CD4-positive, alpha-beta T cell (primary cell): ENCODE measurements at regions of chr17 and their contacts with region 1.

Region 1: GRCh38 chr17:44086364-44087311 is 16.1 kb downstream of the G6PC3 start:
- DNase-seq: peak in 10 of 14 experiments; percentile 10 to 78 (median 38)
- ATAC-seq: peak; percentile 76
- H3K4me3 ChIP-seq: no peak overlapping the region
- H3K4me3 Mint-ChIP-seq: no peak overlapping the region
- H3K27ac ChIP-seq: no peak overlapping the region
- H3K27ac Mint-ChIP-seq: no peak overlapping the region
- H3K4me1 ChIP-seq: peaks cover 6% of the 10 kb centered on the region
- H3K4me1 Mint-ChIP-seq: no peaks in the 10 kb centered on the region
- H3K27me3 ChIP-seq: no peaks in the 10 kb centered on the region
- H3K27me3 Mint-ChIP-seq: no peaks in the 10 kb centered on the region
- CTCF ChIP-seq: no peak

Region 2: GRCh38 chr17:43224146-43224695 is 862.4 kb before region 1 on chr17:
- CTCF ChIA-PET with region 1: no interaction called
- POLR2A ChIA-PET with region 1: no interaction called
- intact Hi-C with region 1: loop called in 1 of 2 experiments (anchors 10 kb)
- DNase-seq: no peak
- ATAC-seq: no peak
- H3K4me3 ChIP-seq: no peak overlapping the region
- H3K4me3 Mint-ChIP-seq: no peak overlapping the region
- H3K27ac ChIP-seq: no peak overlapping the region
- H3K27ac Mint-ChIP-seq: no peak overlapping the region
- H3K4me1 ChIP-seq: no peaks in the 10 kb centered on the region
- H3K4me1 Mint-ChIP-seq: no peaks in the 10 kb centered on the region
- H3K27me3 ChIP-seq: no peaks in the 10 kb centered on the region
- H3K27me3 Mint-ChIP-seq: no peaks in the 10 kb centered on the region
- CTCF ChIP-seq: no peak

Region 3: DNA sequence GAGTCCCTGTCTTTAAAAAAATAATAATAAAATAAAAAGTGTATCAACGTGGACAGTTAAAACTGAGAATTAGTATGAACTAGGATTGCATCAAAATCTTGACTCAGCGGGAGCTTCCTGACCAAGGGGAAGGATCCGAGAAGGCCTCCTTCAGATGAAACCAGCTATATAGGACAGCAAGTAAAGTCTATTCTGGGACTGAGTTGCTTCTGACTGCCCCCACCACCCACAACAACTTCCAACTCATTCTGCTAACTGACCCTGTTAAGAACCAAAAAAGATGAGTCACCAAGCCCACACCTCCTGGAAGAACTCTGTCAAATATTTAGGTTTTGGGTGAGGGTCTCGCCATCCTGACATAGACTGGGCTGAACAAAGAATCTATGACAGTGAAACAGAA is 278.6 kb before region 1 on chr17:
- CTCF ChIA-PET with region 1: no interaction called
- POLR2A ChIA-PET with region 1: no interaction called
- intact Hi-C with region 1: loop called in 1 of 2 experiments (anchors 5 kb)
- DNase-seq: no peak
- ATAC-seq: no peak
- H3K4me3 ChIP-seq: no peak overlapping the region
- H3K4me3 Mint-ChIP-seq: no peak overlapping the region
- H3K27ac ChIP-seq: no peak overlapping the region
- H3K27ac Mint-ChIP-seq: no peak overlapping the region
- H3K4me1 ChIP-seq: no peaks in the 10 kb centered on the region
- H3K4me1 Mint-ChIP-seq: no peaks in the 10 kb centered on the region
- H3K27me3 ChIP-seq: peaks cover 0 to 6% of the 10 kb centered on the region in 2 experiments
- H3K27me3 Mint-ChIP-seq: peaks cover 28% of the 10 kb centered on the region
- CTCF ChIP-seq: no peak